Sigmoid colon (tissue), 7 donors: ENCODE measurements at regions of chr12 and their contacts with region 1.

Region 1: GRCh38 chr12:124940549-124941527 is 26.4 kb upstream of the UBC start:
- DNase-seq: peak; percentile 96
- H3K4me3 ChIP-seq: peak overlapping the region in 3 of 4 donors; percentile 46 to 51 (median 49)
- H3K27ac ChIP-seq: peak overlapping the region; percentile 84 to 96 (median 87)
- H3K4me1 ChIP-seq: peaks cover 0 to 30% (median 26%) of the 10 kb centered on the region in 4 donors
- H3K27me3 ChIP-seq: no peaks in the 10 kb centered on the region
- CTCF ChIP-seq: peak; percentile 90 to 97 (median 95)
- EP300 ChIP-seq: no peak
- POLR2A ChIP-seq: no peak

Region 2: GRCh38 chr12:124428130-124428791 is 512.6 kb before region 1 on chr12:
- intact Hi-C with region 1: no loop called
- DNase-seq: peak; percentile 93
- H3K4me3 ChIP-seq: no peak overlapping the region
- H3K27ac ChIP-seq: peak overlapping the region; percentile 79 to 98 (median 88)
- H3K4me1 ChIP-seq: peaks cover 0 to 68% (median 60%) of the 10 kb centered on the region in 4 donors
- H3K27me3 ChIP-seq: no peaks in the 10 kb centered on the region
- CTCF ChIP-seq: no peak
- EP300 ChIP-seq: peak in 2 of 4 donors; percentile 42 to 59
- POLR2A ChIP-seq: no peak

Region 3: GRCh38 chr12:124917135-124917840 is 23.6 kb before region 1 on chr12:
- intact Hi-C with region 1: loop called (anchors 1 kb)
- DNase-seq: peak; percentile 100
- H3K4me3 ChIP-seq: peak overlapping the region; percentile 17 to 95 (median 63)
- H3K27ac ChIP-seq: peak overlapping the region; percentile 93 to 100 (median 98)
- H3K4me1 ChIP-seq: peaks cover 5 to 61% (median 49%) of the 10 kb centered on the region in 4 donors
- H3K27me3 ChIP-seq: no peaks in the 10 kb centered on the region
- CTCF ChIP-seq: no peak
- EP300 ChIP-seq: peak; percentile 53 to 99 (median 80)
- POLR2A ChIP-seq: peak; percentile 12 to 28

Region 4: GRCh38 chr12:124927201-124928094 is 13.4 kb before region 1 on chr12:
- intact Hi-C with region 1: loop called (anchors 1 kb)
- DNase-seq: peak; percentile 96
- H3K4me3 ChIP-seq: peak overlapping the region; percentile 57 to 70 (median 60)
- H3K27ac ChIP-seq: peak overlapping the region; percentile 85 to 92 (median 90)
- H3K4me1 ChIP-seq: peaks cover 0 to 14% (median 9%) of the 10 kb centered on the region in 4 donors
- H3K27me3 ChIP-seq: no peaks in the 10 kb centered on the region
- CTCF ChIP-seq: no peak
- EP300 ChIP-seq: peak in 1 of 4 donors; percentile 26
- POLR2A ChIP-seq: no peak